ENCODE measurements at regions of chr12 and their contacts with region 1.

Region 1: DNA sequence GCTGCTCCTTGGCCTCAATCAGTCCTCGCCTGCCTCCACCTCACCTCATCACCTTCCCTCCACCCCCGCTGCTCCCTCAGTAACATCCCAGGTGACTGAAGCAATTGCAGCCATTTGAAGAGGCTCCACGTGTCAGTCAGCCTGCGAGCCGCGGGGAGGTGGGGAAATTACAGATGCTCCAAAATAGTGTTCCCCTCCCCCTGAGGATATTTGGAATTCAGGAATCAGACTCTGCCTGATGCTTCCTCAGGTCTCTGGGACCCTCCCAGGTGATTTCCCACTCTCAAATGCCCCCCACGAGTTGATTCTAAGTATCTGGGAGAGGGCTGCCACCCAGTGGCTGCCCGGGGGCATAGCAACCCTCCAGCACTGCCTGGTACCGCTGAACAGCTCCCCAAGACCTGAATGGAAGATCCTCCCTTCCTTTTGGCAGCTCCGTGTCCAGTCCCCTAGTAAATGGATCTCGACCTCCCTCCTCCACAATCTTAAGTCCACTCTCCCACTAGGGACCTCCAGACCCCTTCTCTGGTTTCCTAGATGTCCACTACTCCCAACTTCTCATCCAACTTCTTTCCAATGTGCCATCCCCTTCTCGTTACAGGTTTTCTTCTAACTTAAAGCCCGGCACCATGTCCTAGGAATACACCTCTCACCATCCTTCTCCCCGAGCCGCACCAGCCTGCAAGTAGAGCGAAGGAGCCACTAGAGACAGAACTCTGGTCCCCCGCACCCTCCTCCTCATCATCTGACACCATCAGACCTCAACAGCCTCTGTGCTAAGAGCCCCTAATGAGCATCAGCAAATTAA is 1.4 kb upstream of the ASIC1 start:
- DNase-seq: peak; percentile 75 to 76
- H3K4me3 ChIP-seq: peak overlapping the region; percentile 20
- H3K4me3 Mint-ChIP-seq: peak overlapping the region; percentile 94
- H3K27ac Mint-ChIP-seq: peak overlapping the region; percentile 40
- H3K4me1 ChIP-seq: peaks cover 22% of the 10 kb centered on the region
- H3K4me1 Mint-ChIP-seq: peaks cover 24% of the 10 kb centered on the region
- H3K27me3 ChIP-seq: no peaks in the 10 kb centered on the region
- H3K27me3 Mint-ChIP-seq: peaks cover 2% of the 10 kb centered on the region
- CTCF ChIP-seq: peak; percentile 99

Region 2: GRCh38 chr12:49866859-49867579 is 189.0 kb before region 1 on chr12:
- CTCF ChIA-PET with region 1: interaction called, 19 read pairs
- POLR2A ChIA-PET with region 1: interaction called, 3 read pairs
- intact Hi-C with region 1: loop called (anchors 1 kb)
- DNase-seq: peak; percentile 89 to 93
- H3K4me3 ChIP-seq: 0 out of 2 replicates have a peak overlapping the region, but pooled peaks have one; percentile 1
- H3K4me3 Mint-ChIP-seq: peak overlapping the region; percentile 60
- H3K27ac Mint-ChIP-seq: peak overlapping the region; percentile 90
- H3K4me1 ChIP-seq: peaks cover 53% of the 10 kb centered on the region
- H3K4me1 Mint-ChIP-seq: peaks cover 46% of the 10 kb centered on the region
- H3K27me3 ChIP-seq: no peaks in the 10 kb centered on the region
- H3K27me3 Mint-ChIP-seq: no peaks in the 10 kb centered on the region
- CTCF ChIP-seq: peak; percentile 98 to 99

Region 3: DNA sequence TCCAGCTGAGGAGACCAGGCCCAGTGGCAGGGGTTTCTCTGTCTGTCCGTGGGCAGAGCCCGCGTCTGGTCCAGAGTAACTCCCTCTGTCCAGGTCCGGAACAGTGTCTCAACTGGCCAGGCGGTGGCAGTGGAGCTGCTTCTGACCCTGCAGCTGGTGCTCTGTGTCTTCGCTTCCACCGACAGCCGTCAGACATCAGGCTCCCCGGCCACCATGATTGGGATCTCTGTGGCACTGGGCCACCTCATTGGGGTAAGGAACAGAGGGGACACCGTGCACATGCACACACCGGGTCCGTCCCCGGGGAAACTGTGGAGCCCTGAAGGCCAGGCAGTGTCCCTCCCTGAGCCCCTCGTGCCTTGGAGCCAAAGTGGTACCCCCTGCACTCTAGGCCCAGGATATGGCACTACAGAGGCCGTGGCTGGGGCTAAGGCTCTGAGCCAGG is 81.8 kb before region 1 on chr12:
- CTCF ChIA-PET with region 1: interaction called, 11 read pairs
- POLR2A ChIA-PET with region 1: no interaction called
- intact Hi-C with region 1: loop called (anchors 2 kb)
- DNase-seq: peak in 1 of 2 experiments; percentile 68
- H3K4me3 ChIP-seq: no peak overlapping the region
- H3K4me3 Mint-ChIP-seq: no peak overlapping the region
- H3K27ac Mint-ChIP-seq: no peak overlapping the region
- H3K4me1 ChIP-seq: no peaks in the 10 kb centered on the region; the same call in 1 of the 2 replicates
- H3K4me1 Mint-ChIP-seq: peaks cover 7% of the 10 kb centered on the region
- H3K27me3 ChIP-seq: no peaks in the 10 kb centered on the region
- H3K27me3 Mint-ChIP-seq: no peaks in the 10 kb centered on the region
- CTCF ChIP-seq: peak; percentile 48 to 59

Region 4: GRCh38 chr12:50025187-50026059 is 30.6 kb before region 1 on chr12 and contains the start of gene RACGAP1:
- CTCF ChIA-PET with region 1: interaction called, 12 read pairs
- POLR2A ChIA-PET with region 1: interaction called, 3 read pairs
- intact Hi-C with region 1: no loop called
- DNase-seq: peak; percentile 99
- H3K4me3 ChIP-seq: peak within 1 kb of the TSS; percentile 70
- H3K4me3 Mint-ChIP-seq: peak within 1 kb of the TSS; percentile 86
- H3K27ac Mint-ChIP-seq: peak within 1 kb of the TSS; percentile 92
- H3K4me1 ChIP-seq: peaks cover 4% of the 10 kb centered on the region
- H3K4me1 Mint-ChIP-seq: peaks cover 21% of the 10 kb centered on the region
- H3K27me3 ChIP-seq: no peaks in the 10 kb centered on the region
- H3K27me3 Mint-ChIP-seq: no peaks in the 10 kb centered on the region
- CTCF ChIP-seq: no peak
- total RNA-seq, gene RACGAP1: 122 and 131 TPM in 2 replicates

Region 5: DNA sequence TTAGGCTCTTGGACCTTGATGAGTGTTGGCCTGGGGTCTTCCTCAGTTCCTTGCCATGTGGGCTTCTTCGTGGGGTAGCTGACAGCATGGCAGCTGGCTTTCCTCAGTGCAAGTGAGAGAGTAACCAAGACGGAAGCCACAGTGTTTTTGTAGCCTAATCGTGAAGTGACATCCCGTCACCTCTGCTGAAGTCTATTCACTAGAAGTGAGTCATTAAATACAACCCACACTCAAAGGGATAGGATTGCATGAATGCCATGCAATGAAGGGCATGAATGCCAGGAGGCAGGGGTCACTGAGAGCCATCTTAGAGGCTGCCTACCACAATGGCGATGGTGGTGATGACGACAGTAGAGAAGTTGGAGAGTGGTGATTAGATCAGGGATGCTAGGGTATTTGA is 12.2 kb before region 1 on chr12:
- CTCF ChIA-PET with region 1: interaction called, 43 read pairs
- POLR2A ChIA-PET with region 1: no interaction called
- intact Hi-C with region 1: loop called (anchors 1 kb)
- DNase-seq: peak in 1 of 2 experiments; percentile 17
- H3K4me3 ChIP-seq: no peak overlapping the region
- H3K4me3 Mint-ChIP-seq: no peak overlapping the region
- H3K27ac Mint-ChIP-seq: no peak overlapping the region
- H3K4me1 ChIP-seq: peaks cover 9% of the 10 kb centered on the region
- H3K4me1 Mint-ChIP-seq: peaks cover 11% of the 10 kb centered on the region
- H3K27me3 ChIP-seq: no peaks in the 10 kb centered on the region
- H3K27me3 Mint-ChIP-seq: no peaks in the 10 kb centered on the region
- CTCF ChIP-seq: no peak

Measured in Caco-2 (cell line).